ENCODE measurements at regions of chr19 and their contacts with region 1.

Region 1: GRCh38 chr19:43765109-43765876 is 10.5 kb upstream of the SMG9 start:
- DNase-seq: no peak
- H3K4me3 ChIP-seq: no peak overlapping the region
- H3K27ac ChIP-seq: peak overlapping the region in 1 of 2 experiments; percentile 70
- H3K4me1 ChIP-seq: peaks cover 0 to 60% (median 39%) of the 10 kb centered on the region in 4 experiments
- H3K27me3 ChIP-seq: no peaks in the 10 kb centered on the region

Region 2: DNA sequence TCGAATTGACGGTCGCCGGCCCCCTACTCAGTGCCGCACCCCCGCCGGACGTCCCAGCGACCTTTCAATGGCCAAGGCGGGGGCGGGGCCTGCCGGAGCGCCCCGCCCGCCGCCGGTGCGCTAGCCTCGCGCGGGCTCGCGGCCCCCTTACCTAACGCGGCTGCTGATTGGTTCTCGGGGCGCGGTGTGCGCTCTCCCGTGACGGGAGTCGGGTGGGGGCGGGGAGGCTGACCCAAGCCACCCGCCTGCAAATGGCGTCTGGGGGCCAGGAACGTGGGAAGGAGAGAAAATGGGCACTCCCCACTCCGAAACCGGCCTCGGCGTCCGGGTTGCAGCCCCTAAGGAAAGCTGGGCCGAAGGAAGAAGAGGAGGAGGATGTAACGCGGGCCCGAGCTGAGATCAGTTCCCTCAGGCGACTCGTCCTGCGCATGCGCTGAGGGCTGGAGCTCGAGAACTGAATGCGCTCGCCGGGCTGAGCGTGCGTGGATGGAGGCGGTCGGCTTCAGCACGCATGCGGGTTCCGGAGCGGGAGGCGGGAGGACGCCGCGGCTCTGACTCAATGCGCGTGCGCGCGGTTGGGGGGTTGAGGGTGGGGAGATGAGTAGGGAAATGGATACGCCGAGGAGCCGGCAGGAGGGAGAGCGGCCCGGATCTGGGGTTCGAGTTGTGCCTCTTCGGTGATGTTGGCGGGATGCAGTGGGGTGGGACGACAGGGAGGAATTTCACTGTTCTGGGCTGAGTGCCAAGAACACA is 10.6 kb before region 1 on chr19 and contains the start of gene SMG9:
- CTCF ChIA-PET with region 1: interaction called, 65 read pairs
- POLR2A ChIA-PET with region 1: interaction called, 3 read pairs
- DNase-seq: peak; percentile 96 to 99 (median 98)
- H3K4me3 ChIP-seq: peak within 1 kb of the TSS; percentile 73 to 94 (median 88)
- H3K27ac ChIP-seq: peak within 1 kb of the TSS; percentile 79 to 94
- H3K4me1 ChIP-seq: peaks cover 4 to 43% (median 28%) of the 10 kb centered on the region in 4 experiments
- H3K27me3 ChIP-seq: no peaks in the 10 kb centered on the region

Region 3: DNA sequence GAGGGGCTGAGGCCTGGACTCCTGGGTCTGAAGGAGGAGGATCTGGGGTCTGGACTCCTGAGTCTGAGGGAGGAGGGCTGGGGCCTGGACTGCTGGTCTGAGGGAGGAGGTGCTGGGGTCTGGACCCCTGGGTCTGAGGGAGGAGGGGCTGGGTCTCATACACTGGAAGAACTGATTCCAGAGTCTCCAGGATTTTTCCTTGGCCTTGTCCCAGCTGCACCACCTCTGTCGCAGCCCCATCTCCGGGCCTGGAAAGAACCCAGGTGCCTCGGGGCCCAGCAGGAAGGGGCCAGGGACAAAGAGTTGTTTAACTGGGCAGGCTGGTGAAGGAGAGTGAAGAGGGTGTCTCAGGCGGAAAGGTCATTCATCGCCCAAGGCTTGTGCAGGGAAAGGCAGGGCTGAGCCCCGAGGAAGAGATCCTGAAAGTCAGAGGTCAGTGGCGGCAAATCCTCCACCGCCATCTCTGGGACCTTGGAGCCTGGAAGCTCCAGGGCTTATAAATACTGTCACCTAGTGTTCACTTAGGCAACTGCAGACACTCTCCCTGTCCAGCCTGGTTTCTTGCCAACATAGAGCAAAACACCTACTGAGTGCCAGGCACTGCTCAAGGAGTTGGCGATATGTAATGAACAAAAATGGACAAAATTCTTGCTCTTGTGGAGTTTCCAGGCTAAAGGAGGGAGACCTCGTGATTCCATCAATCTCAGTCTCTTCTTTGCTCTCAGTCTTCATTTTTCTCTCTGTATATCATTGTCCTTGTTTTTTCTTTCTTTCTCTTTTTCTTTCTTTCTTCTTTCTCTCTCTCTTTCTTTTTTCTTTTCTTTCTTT is 19.9 kb after region 1 on chr19:
- CTCF ChIA-PET with region 1: interaction called, 149 read pairs
- POLR2A ChIA-PET with region 1: no interaction called
- DNase-seq: peak; percentile 68 to 76 (median 72)
- H3K4me3 ChIP-seq: peak overlapping the region in 2 of 7 experiments; percentile 7 to 43
- H3K27ac ChIP-seq: peak overlapping the region in 1 of 2 experiments; percentile 62
- H3K4me1 ChIP-seq: peaks cover 0 to 31% (median 18%) of the 10 kb centered on the region in 4 experiments
- H3K27me3 ChIP-seq: no peaks in the 10 kb centered on the region

Region 4: DNA sequence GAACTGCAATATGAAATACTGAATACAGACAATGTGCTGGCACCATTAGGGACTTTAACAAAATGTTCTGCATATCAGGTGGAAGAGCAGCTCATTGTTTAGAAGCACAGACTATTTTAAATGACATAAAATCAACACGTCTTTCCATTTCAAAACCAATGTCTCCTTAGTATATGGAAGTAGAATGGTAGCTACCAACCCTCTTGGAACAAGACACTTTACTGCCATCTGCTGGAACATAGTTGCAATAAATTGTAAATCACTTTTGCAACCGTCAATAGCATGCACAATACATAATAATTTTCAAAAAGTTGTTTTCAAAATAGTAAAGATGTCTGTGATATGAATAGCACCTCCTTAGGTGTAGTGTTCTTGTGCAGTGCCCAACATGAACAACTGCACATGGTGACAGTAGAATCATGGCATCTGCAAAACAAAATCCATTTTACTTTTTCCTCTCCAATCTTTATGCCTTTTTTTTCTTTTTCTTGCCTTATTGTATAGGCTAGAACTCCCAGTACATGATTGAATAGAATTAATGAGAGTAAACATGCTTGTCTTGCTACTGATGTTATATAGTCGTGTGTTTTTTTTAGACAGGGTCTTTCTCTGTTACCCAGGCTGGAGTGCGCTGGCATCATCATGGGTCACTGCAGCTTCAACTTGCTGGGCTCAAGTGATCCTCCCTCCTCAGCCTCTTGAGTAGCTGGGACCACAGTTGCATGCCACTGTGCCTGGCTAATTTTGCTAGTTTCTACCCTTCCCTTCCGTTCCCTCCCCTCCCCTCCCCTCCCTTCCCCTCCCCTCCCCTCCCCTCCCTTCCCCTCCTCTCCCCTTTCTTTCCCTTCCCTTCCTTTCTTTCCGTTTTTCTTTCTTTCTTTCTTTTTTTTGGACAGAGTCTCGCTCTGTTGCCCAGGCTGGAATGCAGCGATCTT is 44.7 kb after region 1 on chr19:
- CTCF ChIA-PET with region 1: interaction called, 11 read pairs
- POLR2A ChIA-PET with region 1: interaction called, 5 read pairs
- DNase-seq: peak; percentile 72 to 88 (median 86)
- H3K4me3 ChIP-seq: no peak overlapping the region
- H3K27ac ChIP-seq: no peak overlapping the region
- H3K4me1 ChIP-seq: no peaks in the 10 kb centered on the region
- H3K27me3 ChIP-seq: peaks cover 0 to 2% (median 0%) of the 10 kb centered on the region in 5 experiments

Region 5: GRCh38 chr19:43880483-43880882 is 115.2 kb after region 1 on chr19:
- CTCF ChIA-PET with region 1: no interaction called
- POLR2A ChIA-PET with region 1: no interaction called
- DNase-seq: no peak
- H3K4me3 ChIP-seq: no peak overlapping the region
- H3K27ac ChIP-seq: no peak overlapping the region
- H3K4me1 ChIP-seq: no peaks in the 10 kb centered on the region
- H3K27me3 ChIP-seq: no peaks in the 10 kb centered on the region

Measured in common myeloid progenitor, CD34-positive (primary cell).